ENCODE measurements at regions of chr18 and their contacts with region 1.

Region 1: GRCh38 chr18:13629841-13630715 is 96.3 kb downstream of the FAM210A start:
- DNase-seq: peak in 35 of 42 donors; percentile 63 to 93 (median 82)

Region 2: GRCh38 chr18:13232086-13232917 is 397.8 kb before region 1 on chr18:
- intact Hi-C with region 1: loop called (anchors 5 kb)
- DNase-seq: peak in 35 of 42 donors; percentile 46 to 84 (median 65)

Region 3: GRCh38 chr18:13558124-13558523 is 72.0 kb before region 1 on chr18:
- intact Hi-C with region 1: loop called (anchors 5 kb)
- DNase-seq: peak; percentile 49 to 91 (median 76)

Region 4: DNA sequence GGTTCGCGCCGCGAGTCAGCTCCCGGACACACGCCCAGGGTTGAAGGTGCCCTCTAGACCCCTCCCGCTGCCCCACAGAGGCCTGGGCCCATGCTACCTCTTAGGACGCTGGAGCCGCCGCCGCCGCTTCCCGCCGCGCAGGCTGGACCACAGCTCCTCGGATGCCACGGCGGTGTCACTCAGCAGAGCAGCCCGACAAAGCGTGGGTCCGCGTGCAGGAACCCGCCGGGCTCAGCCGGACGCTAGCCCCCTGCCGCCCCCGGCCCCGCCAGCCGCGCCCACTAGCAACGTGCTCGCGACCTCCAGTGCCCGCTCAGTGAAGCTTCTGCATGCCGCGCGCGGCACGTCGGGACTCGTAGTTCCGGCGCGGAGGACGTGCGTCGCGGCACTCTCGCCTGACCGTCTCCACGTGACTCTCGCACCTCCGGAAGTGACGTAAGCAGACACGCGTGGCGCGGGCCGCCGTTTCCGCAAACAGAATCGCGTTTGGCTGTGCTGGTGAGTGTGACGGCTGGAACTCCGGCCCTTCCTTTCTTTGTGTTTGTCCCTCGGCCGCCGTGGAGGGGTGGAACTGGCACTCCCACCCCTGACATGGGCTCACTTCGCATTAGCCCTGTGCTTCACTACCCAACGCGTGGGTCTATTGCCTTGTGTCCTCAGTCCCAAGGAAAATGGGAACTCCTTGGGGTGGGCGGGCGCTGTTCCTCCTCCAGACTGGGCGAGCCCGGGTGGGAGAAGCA is 96.3 kb after region 1 on chr18 and contains the starts of genes FAM210A and RNMT:
- intact Hi-C with region 1: loop called (anchors 10 kb)
- DNase-seq: peak; percentile 93 to 99 (median 97)

Measured in head of caudate nucleus (tissue), 42 donors.